GM12878 (cell line): ENCODE measurements at regions of chr5 and their contacts with region 1.

Region 1: DNA sequence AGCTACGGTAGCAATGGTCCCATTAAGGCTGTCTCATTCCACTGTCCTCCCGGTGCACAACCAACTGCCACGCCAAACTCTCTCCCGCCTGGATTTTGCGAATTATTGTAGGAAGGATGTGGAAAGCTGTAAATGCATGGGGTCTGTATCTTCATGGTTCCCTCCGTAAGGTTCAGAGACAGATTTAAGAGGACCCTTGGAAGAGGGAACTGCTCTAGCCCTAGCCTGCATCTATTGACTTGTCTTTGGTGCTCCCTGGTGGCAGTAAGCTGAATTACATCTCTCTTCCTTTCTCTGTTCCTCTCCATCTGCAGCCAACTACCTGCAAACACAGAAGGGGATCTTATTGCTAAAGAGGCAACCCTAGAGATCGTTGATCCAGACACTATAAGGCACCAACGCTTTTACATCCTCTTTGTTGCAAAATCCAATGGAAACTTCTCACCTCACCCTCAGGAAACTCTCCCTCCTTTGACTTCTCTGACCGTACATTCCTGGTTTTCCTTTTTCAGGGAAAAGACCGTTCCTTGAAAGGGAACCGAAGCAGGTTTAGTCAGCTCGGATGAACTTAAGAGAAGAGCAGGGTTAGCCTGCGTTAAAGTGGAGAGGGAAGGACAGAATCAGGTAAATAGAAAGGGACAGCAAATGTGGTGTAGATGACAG is 11.9 kb downstream of the CAPSL start:
- DNase-seq: no peak
- ATAC-seq: peak; percentile 78
- H3K4me3 ChIP-seq: no peak overlapping the region
- H3K27ac ChIP-seq: no peak overlapping the region
- H3K4me1 ChIP-seq: peaks cover 4% of the 10 kb centered on the region; the same call in 1 of the 2 replicates
- H3K27me3 ChIP-seq: peaks cover 0 to 3% of the 10 kb centered on the region in 2 experiments; a peak in 2 of 4 replicates
- CTCF ChIP-seq: peak; percentile 76 to 87 (median 87)
- EP300 ChIP-seq: no peak
- POLR2A ChIP-seq: no peak
- RAD21 ChIP-seq: peak; percentile 93

Region 2: DNA sequence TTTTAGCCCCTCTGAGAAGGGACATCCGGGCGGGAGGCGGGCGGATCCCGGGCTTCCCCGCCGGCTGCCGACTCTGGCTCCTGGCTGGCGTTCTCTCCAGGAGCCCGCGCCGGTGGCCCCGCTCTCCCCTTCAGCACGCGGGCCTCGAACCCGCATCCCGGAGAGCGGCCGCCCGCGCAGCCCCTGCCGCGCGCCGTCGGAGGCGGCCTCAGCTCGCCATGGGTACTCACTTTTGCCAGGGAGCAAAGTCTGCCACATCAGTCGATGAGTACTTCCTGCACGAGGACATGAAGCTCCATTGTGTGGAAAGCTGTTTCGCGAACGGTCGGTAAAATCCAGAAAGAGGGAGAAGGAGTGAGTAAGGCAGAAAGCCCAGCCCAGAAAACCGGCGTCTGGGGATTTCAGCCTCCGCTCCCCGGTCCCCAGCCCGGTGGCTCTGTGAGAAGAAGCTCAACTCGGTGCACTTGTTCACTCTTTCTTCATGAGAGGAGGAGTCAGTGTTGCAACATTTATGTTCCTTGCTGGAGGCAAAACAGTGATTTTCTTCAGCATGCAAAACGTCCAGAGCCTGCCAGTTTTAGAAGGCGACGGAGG is 696.4 kb before region 1 on chr5 and contains the start of gene PRLR:
- CTCF ChIA-PET with region 1: interaction called, 18 read pairs
- POLR2A ChIA-PET with region 1: no interaction called
- RAD21 ChIA-PET with region 1: interaction called, 7 read pairs
- SMC1A ChIA-PET with region 1: no interaction called
- in situ Hi-C with region 1: no loop called
- intact Hi-C with region 1: loop called (anchors 5 kb)
- DNase-seq: no peak
- ATAC-seq: peak; percentile 38
- H3K4me3 ChIP-seq: peak within 1 kb of the TSS; percentile 64
- H3K27ac ChIP-seq: peak within 1 kb of the TSS; percentile 25; the same call in 1 of the 2 replicates
- H3K4me1 ChIP-seq: no peaks in the 10 kb centered on the region
- H3K27me3 ChIP-seq: peaks cover 0 to 8% of the 10 kb centered on the region in 2 experiments; a peak in 2 of 4 replicates
- CTCF ChIP-seq: no peak
- EP300 ChIP-seq: no peak
- POLR2A ChIP-seq: no peak
- RAD21 ChIP-seq: no peak
- polyA plus RNA-seq, gene PRLR: 0.04 to 0.85 TPM

Region 3: GRCh38 chr5:35651002-35651756 is 275.3 kb before region 1 on chr5:
- CTCF ChIA-PET with region 1: interaction called, 192 read pairs
- POLR2A ChIA-PET with region 1: no interaction called
- RAD21 ChIA-PET with region 1: interaction called, 98 read pairs
- SMC1A ChIA-PET with region 1: interaction called, 61 read pairs
- in situ Hi-C with region 1: loop called (anchors 5 kb)
- intact Hi-C with region 1: loop called (anchors 1 kb)
- DNase-seq: no peak
- ATAC-seq: peak; percentile 98
- H3K4me3 ChIP-seq: no peak overlapping the region
- H3K27ac ChIP-seq: no peak overlapping the region
- H3K4me1 ChIP-seq: no peaks in the 10 kb centered on the region
- H3K27me3 ChIP-seq: no peaks in the 10 kb centered on the region
- CTCF ChIP-seq: peak; percentile 45 to 57 (median 57); a peak in 4 of 6 replicates
- EP300 ChIP-seq: no peak
- POLR2A ChIP-seq: no peak
- RAD21 ChIP-seq: peak; percentile 56

Region 4: DNA sequence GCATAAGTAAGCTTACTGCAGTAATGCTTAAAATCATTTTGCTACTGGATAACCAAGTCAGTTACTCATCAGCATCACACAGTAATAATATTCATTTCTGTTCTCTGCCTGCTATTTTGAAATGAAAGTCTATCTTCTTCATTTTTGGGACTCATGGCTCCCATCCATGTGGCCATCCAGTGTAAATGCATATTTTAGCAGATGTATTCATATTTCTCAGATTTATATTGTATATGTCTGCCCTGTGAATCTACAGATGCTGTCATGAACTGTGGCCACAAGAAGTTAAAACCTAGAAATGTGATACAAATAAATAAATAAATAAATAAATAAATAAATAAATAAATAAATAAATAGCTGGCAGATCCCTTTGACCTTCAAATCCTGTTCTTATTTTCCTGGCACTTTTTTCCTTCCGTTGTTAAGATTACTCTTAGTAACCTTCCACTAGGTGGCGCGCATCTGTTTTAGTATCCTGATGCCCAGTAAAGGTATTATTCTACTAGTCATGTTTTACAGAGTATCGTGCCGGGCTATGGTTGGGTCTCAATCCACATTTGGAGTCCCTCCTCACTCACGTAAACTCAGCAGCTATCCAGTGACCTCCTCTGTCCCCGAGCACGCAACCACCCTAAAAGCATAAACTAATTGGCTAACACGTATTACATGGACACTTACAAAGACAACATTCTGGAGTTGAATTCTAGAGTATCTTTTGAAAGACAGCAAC is 149.0 kb before region 1 on chr5:
- CTCF ChIA-PET with region 1: interaction called, 359 read pairs
- POLR2A ChIA-PET with region 1: interaction called, 3 read pairs
- RAD21 ChIA-PET with region 1: interaction called, 128 read pairs
- SMC1A ChIA-PET with region 1: interaction called, 276 read pairs
- in situ Hi-C with region 1: loop called (anchors 5 kb)
- intact Hi-C with region 1: loop called (anchors 1 kb)
- DNase-seq: no peak
- ATAC-seq: peak; percentile 90
- H3K4me3 ChIP-seq: no peak overlapping the region
- H3K27ac ChIP-seq: no peak overlapping the region
- H3K4me1 ChIP-seq: no peaks in the 10 kb centered on the region
- H3K27me3 ChIP-seq: no peaks in the 10 kb centered on the region
- CTCF ChIP-seq: peak; percentile 53 to 67 (median 56); a peak in 5 of 6 replicates
- EP300 ChIP-seq: no peak
- POLR2A ChIP-seq: no peak
- RAD21 ChIP-seq: peak; percentile 88

Region 5: GRCh38 chr5:35811108-35811741 is 115.3 kb before region 1 on chr5:
- CTCF ChIA-PET with region 1: interaction called, 21 read pairs
- POLR2A ChIA-PET with region 1: no interaction called
- RAD21 ChIA-PET with region 1: interaction called, 9 read pairs
- SMC1A ChIA-PET with region 1: interaction called, 5 read pairs
- in situ Hi-C with region 1: no loop called
- intact Hi-C with region 1: no loop called
- DNase-seq: no peak
- ATAC-seq: peak; percentile 49
- H3K4me3 ChIP-seq: no peak overlapping the region
- H3K27ac ChIP-seq: no peak overlapping the region
- H3K4me1 ChIP-seq: no peaks in the 10 kb centered on the region
- H3K27me3 ChIP-seq: no peaks in the 10 kb centered on the region
- CTCF ChIP-seq: no peak
- EP300 ChIP-seq: no peak
- POLR2A ChIP-seq: no peak
- RAD21 ChIP-seq: no peak

Region 6: GRCh38 chr5:35908228-35908627 is 18.3 kb before region 1 on chr5:
- CTCF ChIA-PET with region 1: interaction called, 13 read pairs
- POLR2A ChIA-PET with region 1: no interaction called
- RAD21 ChIA-PET with region 1: interaction called, 6 read pairs
- SMC1A ChIA-PET with region 1: interaction called, 36 read pairs
- in situ Hi-C with region 1: no loop called
- intact Hi-C with region 1: no loop called
- DNase-seq: no peak
- ATAC-seq: no peak
- H3K4me3 ChIP-seq: no peak overlapping the region
- H3K27ac ChIP-seq: no peak overlapping the region
- H3K4me1 ChIP-seq: peaks cover 14% of the 10 kb centered on the region
- H3K27me3 ChIP-seq: no peaks in the 10 kb centered on the region
- CTCF ChIP-seq: no peak
- EP300 ChIP-seq: no peak
- POLR2A ChIP-seq: no peak
- RAD21 ChIP-seq: no peak

Region 7: GRCh38 chr5:35979715-35980114 is 53.2 kb after region 1 on chr5:
- CTCF ChIA-PET with region 1: no interaction called
- POLR2A ChIA-PET with region 1: no interaction called
- RAD21 ChIA-PET with region 1: no interaction called
- SMC1A ChIA-PET with region 1: no interaction called
- in situ Hi-C with region 1: no loop called
- intact Hi-C with region 1: no loop called
- DNase-seq: no peak
- ATAC-seq: no peak
- H3K4me3 ChIP-seq: no peak overlapping the region
- H3K27ac ChIP-seq: no peak overlapping the region
- H3K4me1 ChIP-seq: no peaks in the 10 kb centered on the region
- H3K27me3 ChIP-seq: no peaks in the 10 kb centered on the region
- CTCF ChIP-seq: no peak
- EP300 ChIP-seq: no peak
- POLR2A ChIP-seq: no peak
- RAD21 ChIP-seq: no peak